OCI-LY7 (cell line): ENCODE measurements at regions of chr1 and their contacts with region 1.

Region 1: GRCh38 chr1:175033953-175034352 is 10.7 kb upstream of the MRPS14 start:
- DNase-seq: no peak
- H3K4me3 ChIP-seq: no peak overlapping the region
- H3K27ac ChIP-seq: no peak overlapping the region
- H3K4me1 ChIP-seq: peaks cover 7% of the 10 kb centered on the region
- CTCF ChIP-seq: no peak

Region 2: DNA sequence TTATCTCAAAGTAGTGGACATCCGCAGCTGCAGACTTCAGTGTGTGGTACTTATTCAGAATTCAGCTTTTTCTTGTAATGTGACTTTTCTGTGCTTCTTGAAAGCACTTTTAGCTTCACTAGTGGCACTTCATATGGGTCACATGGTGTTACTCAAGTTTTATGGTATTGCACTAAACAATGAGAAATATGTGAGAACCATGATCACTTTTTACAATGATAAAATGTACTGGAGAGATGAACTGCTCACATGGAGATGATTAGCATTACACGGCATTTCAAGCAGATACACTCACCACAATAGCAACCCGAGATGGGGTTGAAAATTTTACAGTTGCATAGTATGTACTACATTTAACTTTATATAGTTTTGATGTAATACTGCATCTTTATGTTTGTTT is 626.3 kb before region 1 on chr1:
- CTCF ChIA-PET with region 1: no interaction called
- POLR2A ChIA-PET with region 1: no interaction called
- intact Hi-C with region 1: no loop called
- DNase-seq: no peak
- H3K4me3 ChIP-seq: no peak overlapping the region
- H3K27ac ChIP-seq: no peak overlapping the region
- H3K4me1 ChIP-seq: no peaks in the 10 kb centered on the region
- CTCF ChIP-seq: no peak

Region 3: DNA sequence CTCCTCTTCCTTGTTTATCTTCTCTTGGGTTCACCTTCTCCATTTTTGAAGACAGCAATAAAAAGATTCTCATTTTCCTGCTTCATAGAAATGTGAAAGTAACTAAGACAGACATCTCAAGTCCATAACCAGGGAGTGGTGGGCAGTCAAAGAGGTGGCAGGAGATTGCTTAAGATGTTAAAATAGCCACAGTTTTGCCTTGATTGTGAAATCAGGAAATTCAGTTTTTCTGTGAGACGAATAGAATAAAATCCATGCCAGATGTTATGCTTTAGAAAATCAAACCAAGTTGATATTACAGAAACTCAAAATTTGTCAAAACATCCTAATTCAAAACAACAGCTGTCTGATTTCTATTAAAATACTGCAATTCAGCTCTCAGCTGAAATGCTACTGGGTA is 90.9 kb after region 1 on chr1:
- CTCF ChIA-PET with region 1: interaction called, 12 read pairs
- POLR2A ChIA-PET with region 1: no interaction called
- intact Hi-C with region 1: loop called (anchors 1 kb)
- DNase-seq: no peak
- H3K4me3 ChIP-seq: no peak overlapping the region
- H3K27ac ChIP-seq: no peak overlapping the region
- H3K4me1 ChIP-seq: peaks cover 14% of the 10 kb centered on the region
- CTCF ChIP-seq: no peak

Region 4: DNA sequence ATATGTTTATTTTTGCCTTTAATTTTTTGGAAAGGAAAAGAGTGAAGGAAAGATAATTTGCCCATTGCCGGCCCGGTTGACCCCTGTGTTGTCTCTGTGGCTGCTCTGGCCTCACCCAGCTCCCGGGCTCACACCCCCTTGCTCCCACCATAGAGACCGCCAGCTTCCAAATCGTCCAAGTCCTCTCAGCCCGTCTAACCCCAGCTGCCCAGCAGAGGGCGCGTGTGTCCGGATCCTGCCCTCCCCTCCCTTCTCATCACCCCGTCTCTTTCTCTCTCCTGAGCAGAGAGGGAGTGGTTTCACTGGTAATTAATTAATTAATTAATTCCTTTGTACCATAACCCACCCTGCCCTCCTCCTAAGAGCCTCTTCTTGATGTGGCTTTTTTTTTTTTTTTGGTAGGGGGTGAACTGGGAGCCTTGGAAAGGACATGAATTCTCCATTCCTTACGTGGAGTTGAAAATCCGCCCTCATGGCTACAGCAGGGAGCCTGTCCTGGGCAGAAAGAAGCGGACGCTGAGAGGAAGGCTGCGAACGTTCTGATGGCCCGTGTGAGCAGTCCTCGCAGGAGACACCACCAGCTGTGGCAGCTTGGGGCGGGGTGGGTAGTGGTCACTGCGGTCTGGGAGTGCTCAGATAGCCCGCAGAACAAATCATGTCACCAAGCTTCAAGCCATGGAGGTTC is 112.7 kb after region 1 on chr1:
- CTCF ChIA-PET with region 1: interaction called, 3 read pairs
- POLR2A ChIA-PET with region 1: no interaction called
- intact Hi-C with region 1: loop called (anchors 1 kb)
- DNase-seq: peak; percentile 74
- H3K4me3 ChIP-seq: no peak overlapping the region
- H3K27ac ChIP-seq: no peak overlapping the region
- H3K4me1 ChIP-seq: peaks cover 11% of the 10 kb centered on the region
- CTCF ChIP-seq: peak; percentile 98